Activated CD4-positive, alpha-beta memory T cell treated with anti-CD3 and anti-CD28 coated beads, Interleukin-2, amount 10 ng/mL, durations not matched to agents 7 days and 5 days (primary cell): ENCODE measurements at regions of chr18 and their contacts with region 1.

Region 1: DNA sequence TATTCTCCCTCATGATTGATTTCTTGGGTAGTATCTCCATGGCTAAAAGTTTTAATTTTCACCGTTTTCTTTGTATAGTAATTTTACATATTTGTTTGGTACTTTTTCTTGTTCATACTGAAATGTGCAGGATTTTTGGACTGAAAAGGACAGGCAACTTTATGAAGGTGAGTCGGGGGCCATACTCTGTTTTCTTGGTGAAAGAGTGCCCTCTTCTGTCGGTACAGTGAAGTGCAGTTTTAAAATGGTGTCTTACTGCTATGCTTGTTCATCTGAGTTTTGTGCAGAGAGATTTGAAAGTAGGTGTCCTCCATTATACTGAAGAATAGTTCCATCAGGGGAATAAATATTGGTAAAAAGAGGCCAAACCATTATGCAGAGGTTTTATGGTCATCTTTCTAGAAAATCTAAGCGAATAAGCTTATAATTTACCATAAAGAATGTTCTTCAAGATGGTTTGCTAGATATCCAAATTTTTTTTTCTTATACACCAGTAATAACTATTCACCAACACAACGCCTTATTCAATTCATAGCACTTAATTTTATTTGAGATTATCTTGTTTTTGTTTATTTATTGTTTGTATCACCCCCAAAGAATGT is 8.7 kb upstream of the SERPINB13 start:
- DNase-seq: peak; percentile 22
- H3K4me3 Mint-ChIP-seq: no peak overlapping the region
- H3K27ac Mint-ChIP-seq: no peak overlapping the region
- H3K4me1 Mint-ChIP-seq: no peaks in the 10 kb centered on the region
- H3K27me3 Mint-ChIP-seq: peaks cover 18% of the 10 kb centered on the region

Region 2: DNA sequence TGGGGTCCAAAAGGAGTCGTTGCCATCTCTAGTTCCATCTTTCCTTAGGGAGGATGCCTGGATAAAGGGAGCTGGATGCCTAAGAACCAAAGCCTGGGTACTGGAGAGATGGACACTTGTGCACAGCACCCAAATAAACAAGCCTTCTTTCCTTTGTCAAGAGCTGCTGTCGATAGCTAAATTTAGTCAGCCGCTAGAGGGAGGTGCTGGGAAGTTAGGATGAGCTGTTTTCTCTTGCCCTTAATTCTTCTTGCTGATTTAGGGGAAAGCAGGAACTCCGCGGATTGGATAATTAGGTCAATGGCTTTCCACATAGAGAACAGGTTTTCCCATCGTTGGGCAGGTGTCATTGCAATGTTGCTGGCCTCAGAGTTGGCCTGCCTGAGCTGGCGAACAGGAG is 67.2 kb before region 1 on chr18:
- CTCF ChIA-PET with region 1: interaction called, 104 read pairs
- POLR2A ChIA-PET with region 1: no interaction called
- DNase-seq: no peak
- H3K4me3 Mint-ChIP-seq: no peak overlapping the region
- H3K27ac Mint-ChIP-seq: no peak overlapping the region
- H3K4me1 Mint-ChIP-seq: no peaks in the 10 kb centered on the region
- H3K27me3 Mint-ChIP-seq: peaks cover 30% of the 10 kb centered on the region

Region 3: GRCh38 chr18:63528863-63529492 is 49.5 kb before region 1 on chr18:
- CTCF ChIA-PET with region 1: interaction called, 15 read pairs
- POLR2A ChIA-PET with region 1: no interaction called
- DNase-seq: no peak
- H3K4me3 Mint-ChIP-seq: no peak overlapping the region
- H3K27ac Mint-ChIP-seq: no peak overlapping the region
- H3K4me1 Mint-ChIP-seq: peaks cover 6% of the 10 kb centered on the region
- H3K27me3 Mint-ChIP-seq: peaks cover 31% of the 10 kb centered on the region

Region 4: DNA sequence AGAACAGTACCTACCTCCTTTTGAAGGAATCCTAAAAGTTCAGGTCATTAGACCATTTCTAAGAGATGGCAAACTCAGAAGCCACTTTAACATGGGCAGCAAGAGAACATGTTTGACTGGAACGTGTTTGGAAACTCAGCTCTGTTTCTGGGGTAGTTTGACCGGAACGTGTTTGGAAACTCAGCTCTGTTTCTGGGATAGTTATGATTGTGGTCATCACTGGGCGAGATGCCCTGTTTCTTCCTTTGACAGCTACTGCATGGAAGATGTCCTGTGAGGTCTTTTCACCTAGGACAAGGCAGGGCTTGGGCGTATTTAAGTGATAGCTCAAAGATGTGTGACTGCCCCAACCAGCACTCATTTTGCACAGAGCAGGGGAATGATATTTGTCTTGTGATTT is 11.2 kb before region 1 on chr18:
- CTCF ChIA-PET with region 1: interaction called, 12 read pairs
- POLR2A ChIA-PET with region 1: no interaction called
- DNase-seq: no peak
- H3K4me3 Mint-ChIP-seq: no peak overlapping the region
- H3K27ac Mint-ChIP-seq: no peak overlapping the region
- H3K4me1 Mint-ChIP-seq: no peaks in the 10 kb centered on the region
- H3K27me3 Mint-ChIP-seq: peaks cover 33% of the 10 kb centered on the region